ENCODE measurements at regions of chr11 and their contacts with region 1.

Region 1: GRCh38 chr11:13335319-13335718 is 57.7 kb downstream of the BMAL1 start:
- DNase-seq: no peak
- ATAC-seq: peak; percentile 45
- H3K4me3 ChIP-seq: no peak overlapping the region
- H3K27ac ChIP-seq: no peak overlapping the region
- H3K4me1 ChIP-seq: peaks cover 39% of the 10 kb centered on the region
- H3K27me3 ChIP-seq: no peaks in the 10 kb centered on the region
- CTCF ChIP-seq: peak; percentile 83 to 89 (median 85)
- EP300 ChIP-seq: no peak
- POLR2A ChIP-seq: no peak
- RAD21 ChIP-seq: peak; percentile 87

Region 2: DNA sequence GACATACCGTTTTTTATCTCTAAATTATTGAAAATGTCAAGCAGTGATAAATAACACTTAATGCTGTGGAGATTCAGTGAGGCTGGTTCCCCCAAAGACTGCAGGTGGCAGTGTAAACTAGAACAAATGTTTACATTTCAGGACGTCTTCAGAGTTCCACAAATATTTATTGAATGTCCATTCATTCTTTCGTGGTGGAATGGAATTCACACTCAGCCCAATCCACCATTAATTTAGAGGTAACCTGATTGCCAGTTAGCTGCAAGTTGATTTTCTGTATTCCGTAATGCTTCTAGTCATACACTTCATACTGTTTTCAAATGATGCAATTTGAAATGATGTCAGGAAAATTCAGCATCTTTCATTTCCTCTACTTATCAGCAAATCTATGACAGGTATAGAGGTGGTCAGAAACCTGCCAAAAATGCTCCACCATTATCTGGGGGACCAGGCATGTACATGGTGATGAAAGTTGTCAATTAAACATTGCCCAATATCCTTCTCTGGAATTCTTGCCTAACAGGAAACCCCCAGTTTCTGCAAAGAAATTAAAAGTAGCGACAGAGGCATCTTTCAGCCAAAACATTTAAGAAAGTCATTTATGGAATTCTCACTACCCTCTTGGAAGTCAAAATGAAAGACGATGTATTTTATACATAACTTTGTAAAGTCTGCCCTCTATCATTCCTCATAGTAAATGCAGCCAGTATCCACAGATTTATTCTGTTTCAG is 152.1 kb before region 1 on chr11:
- CTCF ChIA-PET with region 1: interaction called, 5 read pairs
- POLR2A ChIA-PET with region 1: no interaction called
- RAD21 ChIA-PET with region 1: interaction called, 4 read pairs
- SMC1A ChIA-PET with region 1: interaction called, 6 read pairs
- in situ Hi-C with region 1: no loop called
- intact Hi-C with region 1: loop called (anchors 2 kb)
- DNase-seq: no peak
- ATAC-seq: peak; percentile 81
- H3K4me3 ChIP-seq: no peak overlapping the region
- H3K27ac ChIP-seq: no peak overlapping the region
- H3K4me1 ChIP-seq: peaks cover 4% of the 10 kb centered on the region
- H3K27me3 ChIP-seq: no peaks in the 10 kb centered on the region
- CTCF ChIP-seq: peak; percentile 49 to 60 (median 55)
- EP300 ChIP-seq: no peak
- POLR2A ChIP-seq: no peak
- RAD21 ChIP-seq: peak; percentile 59

Region 3: GRCh38 chr11:13249996-13250395 is 85.3 kb before region 1 on chr11:
- CTCF ChIA-PET with region 1: interaction called, 253 read pairs
- POLR2A ChIA-PET with region 1: interaction called, 6 read pairs
- RAD21 ChIA-PET with region 1: interaction called, 171 read pairs
- SMC1A ChIA-PET with region 1: interaction called, 132 read pairs
- in situ Hi-C with region 1: no loop called
- intact Hi-C with region 1: loop called (anchors 2 kb)
- DNase-seq: no peak
- ATAC-seq: peak; percentile 89
- H3K4me3 ChIP-seq: no peak overlapping the region
- H3K27ac ChIP-seq: no peak overlapping the region
- H3K4me1 ChIP-seq: no peaks in the 10 kb centered on the region
- H3K27me3 ChIP-seq: no peaks in the 10 kb centered on the region; a peak in 2 of 4 replicates
- CTCF ChIP-seq: peak; percentile 43 to 65 (median 49); a peak in 4 of 6 replicates
- EP300 ChIP-seq: no peak
- POLR2A ChIP-seq: no peak
- RAD21 ChIP-seq: peak; percentile 57

Region 4: DNA sequence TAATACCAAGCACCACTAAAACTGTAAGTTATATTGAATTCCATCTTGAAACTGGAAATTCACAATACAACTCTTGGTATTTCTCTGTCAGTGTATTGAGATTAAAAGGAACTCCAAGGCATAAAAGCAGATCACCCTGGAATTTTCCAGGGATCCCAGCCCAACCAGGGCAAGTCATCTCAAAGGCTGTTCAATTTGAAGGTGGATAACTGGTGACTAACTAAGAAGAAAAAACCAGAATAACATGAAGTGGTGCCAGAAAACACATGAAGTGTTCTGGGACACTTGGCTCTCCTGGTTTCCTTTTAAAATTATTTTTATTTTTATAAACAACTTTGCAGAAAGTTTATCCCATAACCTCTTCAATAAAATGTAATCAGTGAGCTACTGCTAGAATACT is 65.5 kb before region 1 on chr11:
- CTCF ChIA-PET with region 1: interaction called, 26 read pairs
- POLR2A ChIA-PET with region 1: no interaction called
- RAD21 ChIA-PET with region 1: interaction called, 7 read pairs
- SMC1A ChIA-PET with region 1: interaction called, 33 read pairs
- in situ Hi-C with region 1: no loop called
- intact Hi-C with region 1: no loop called
- DNase-seq: no peak
- ATAC-seq: no peak
- H3K4me3 ChIP-seq: no peak overlapping the region
- H3K27ac ChIP-seq: no peak overlapping the region
- H3K4me1 ChIP-seq: no peaks in the 10 kb centered on the region
- H3K27me3 ChIP-seq: peaks cover 0 to 5% of the 10 kb centered on the region in 2 experiments
- CTCF ChIP-seq: no peak
- EP300 ChIP-seq: no peak
- POLR2A ChIP-seq: no peak
- RAD21 ChIP-seq: no peak

Region 5: GRCh38 chr11:13297917-13298356 is 37.4 kb before region 1 on chr11:
- CTCF ChIA-PET with region 1: interaction called, 36 read pairs
- POLR2A ChIA-PET with region 1: interaction called, 4 read pairs
- RAD21 ChIA-PET with region 1: interaction called, 65 read pairs
- SMC1A ChIA-PET with region 1: interaction called, 107 read pairs
- in situ Hi-C with region 1: no loop called
- intact Hi-C with region 1: no loop called
- DNase-seq: no peak
- ATAC-seq: no peak; the same call in 1 of the 3 replicates
- H3K4me3 ChIP-seq: no peak overlapping the region
- H3K27ac ChIP-seq: no peak overlapping the region
- H3K4me1 ChIP-seq: peaks cover 8% of the 10 kb centered on the region
- H3K27me3 ChIP-seq: no peaks in the 10 kb centered on the region
- CTCF ChIP-seq: no peak
- EP300 ChIP-seq: no peak
- POLR2A ChIP-seq: no peak
- RAD21 ChIP-seq: no peak

Region 6: GRCh38 chr11:13354335-13354734 is 19.0 kb after region 1 on chr11:
- CTCF ChIA-PET with region 1: interaction called, 8 read pairs
- POLR2A ChIA-PET with region 1: no interaction called
- RAD21 ChIA-PET with region 1: interaction called, 3 read pairs
- SMC1A ChIA-PET with region 1: interaction called, 11 read pairs
- in situ Hi-C with region 1: no loop called
- intact Hi-C with region 1: no loop called
- DNase-seq: no peak
- ATAC-seq: peak; percentile 22; the same call in 2 of the 3 replicates
- H3K4me3 ChIP-seq: no peak overlapping the region
- H3K27ac ChIP-seq: no peak overlapping the region
- H3K4me1 ChIP-seq: no peaks in the 10 kb centered on the region
- H3K27me3 ChIP-seq: no peaks in the 10 kb centered on the region
- CTCF ChIP-seq: peak; percentile 23 to 30 (median 29); a peak in 4 of 6 replicates
- EP300 ChIP-seq: no peak
- POLR2A ChIP-seq: no peak
- RAD21 ChIP-seq: no peak

Region 7: DNA sequence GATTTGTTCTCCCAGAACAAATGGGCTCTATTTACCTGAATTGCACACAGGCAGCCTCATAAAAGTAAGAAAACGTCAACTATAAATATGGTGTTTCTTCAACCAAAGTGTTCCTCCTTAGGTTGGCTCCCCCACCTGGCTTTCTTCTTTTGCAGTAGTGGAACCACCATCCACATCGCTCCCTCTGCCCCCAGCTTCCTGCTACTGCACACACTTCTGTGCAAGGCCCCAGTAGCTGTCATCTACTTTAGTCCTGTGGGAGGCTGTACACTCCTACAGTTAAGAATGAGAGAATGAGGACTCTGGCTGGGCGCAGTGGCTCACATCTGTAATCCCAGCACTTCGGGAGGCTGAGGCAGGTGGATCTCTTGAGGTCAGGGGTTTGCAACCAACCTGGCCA is 31.8 kb after region 1 on chr11:
- CTCF ChIA-PET with region 1: no interaction called
- POLR2A ChIA-PET with region 1: no interaction called
- RAD21 ChIA-PET with region 1: no interaction called
- SMC1A ChIA-PET with region 1: no interaction called
- in situ Hi-C with region 1: no loop called
- intact Hi-C with region 1: no loop called
- DNase-seq: no peak
- ATAC-seq: no peak
- H3K4me3 ChIP-seq: no peak overlapping the region
- H3K27ac ChIP-seq: no peak overlapping the region
- H3K4me1 ChIP-seq: no peaks in the 10 kb centered on the region
- H3K27me3 ChIP-seq: no peaks in the 10 kb centered on the region
- CTCF ChIP-seq: no peak
- EP300 ChIP-seq: no peak
- POLR2A ChIP-seq: no peak
- RAD21 ChIP-seq: peak; percentile 26; the same call in 1 of the 2 replicates

Region 8: GRCh38 chr11:13503393-13503792 is 168.1 kb after region 1 on chr11:
- CTCF ChIA-PET with region 1: no interaction called
- POLR2A ChIA-PET with region 1: no interaction called
- RAD21 ChIA-PET with region 1: no interaction called
- SMC1A ChIA-PET with region 1: no interaction called
- in situ Hi-C with region 1: no loop called
- intact Hi-C with region 1: no loop called
- DNase-seq: no peak
- ATAC-seq: no peak
- H3K4me3 ChIP-seq: no peak overlapping the region
- H3K27ac ChIP-seq: no peak overlapping the region
- H3K4me1 ChIP-seq: no peaks in the 10 kb centered on the region
- H3K27me3 ChIP-seq: no peaks in the 10 kb centered on the region
- CTCF ChIP-seq: no peak
- EP300 ChIP-seq: no peak
- POLR2A ChIP-seq: no peak
- RAD21 ChIP-seq: no peak

Region 9: GRCh38 chr11:13629779-13630178 is 294.5 kb after region 1 on chr11:
- CTCF ChIA-PET with region 1: no interaction called
- POLR2A ChIA-PET with region 1: no interaction called
- RAD21 ChIA-PET with region 1: no interaction called
- SMC1A ChIA-PET with region 1: no interaction called
- in situ Hi-C with region 1: no loop called
- intact Hi-C with region 1: no loop called
- DNase-seq: no peak
- ATAC-seq: no peak
- H3K4me3 ChIP-seq: no peak overlapping the region
- H3K27ac ChIP-seq: no peak overlapping the region
- H3K4me1 ChIP-seq: no peaks in the 10 kb centered on the region
- H3K27me3 ChIP-seq: no peaks in the 10 kb centered on the region
- CTCF ChIP-seq: no peak
- EP300 ChIP-seq: no peak
- POLR2A ChIP-seq: no peak
- RAD21 ChIP-seq: no peak

Measured in GM12878 (cell line).